Activated CD4-positive, alpha-beta T cell treated with anti-CD3 and anti-CD28 coated beads, Interleukin-2, amount 10 ng/mL, durations not matched to agents 7 days and 5 days (primary cell): ENCODE measurements at regions of chr20 and their contacts with region 1.

Region 1: GRCh38 chr20:32018269-32019074 is 8.2 kb downstream of the CCM2L start:
- DNase-seq: peak; percentile 34
- H3K4me3 Mint-ChIP-seq: peak overlapping the region; percentile 67
- H3K27ac Mint-ChIP-seq: no peak overlapping the region
- H3K4me1 Mint-ChIP-seq: peaks cover 23% of the 10 kb centered on the region
- H3K27me3 Mint-ChIP-seq: peaks cover 76% of the 10 kb centered on the region

Region 2: GRCh38 chr20:32007787-32008616 is 10.5 kb before region 1 on chr20:
- CTCF ChIA-PET with region 1: no interaction called
- POLR2A ChIA-PET with region 1: no interaction called
- DNase-seq: no peak
- H3K4me3 Mint-ChIP-seq: no peak overlapping the region
- H3K27ac Mint-ChIP-seq: no peak overlapping the region
- H3K4me1 Mint-ChIP-seq: peaks cover 10% of the 10 kb centered on the region
- H3K27me3 Mint-ChIP-seq: peaks cover 6% of the 10 kb centered on the region

Region 3: GRCh38 chr20:32031007-32031958 is 12.8 kb after region 1 on chr20:
- CTCF ChIA-PET with region 1: interaction called, 13 read pairs
- POLR2A ChIA-PET with region 1: no interaction called
- DNase-seq: peak; percentile 60
- H3K4me3 Mint-ChIP-seq: no peak overlapping the region
- H3K27ac Mint-ChIP-seq: no peak overlapping the region
- H3K4me1 Mint-ChIP-seq: no peaks in the 10 kb centered on the region
- H3K27me3 Mint-ChIP-seq: peaks cover 30% of the 10 kb centered on the region